ENCODE measurements at regions of chr15 and their contacts with region 1.

Region 1: DNA sequence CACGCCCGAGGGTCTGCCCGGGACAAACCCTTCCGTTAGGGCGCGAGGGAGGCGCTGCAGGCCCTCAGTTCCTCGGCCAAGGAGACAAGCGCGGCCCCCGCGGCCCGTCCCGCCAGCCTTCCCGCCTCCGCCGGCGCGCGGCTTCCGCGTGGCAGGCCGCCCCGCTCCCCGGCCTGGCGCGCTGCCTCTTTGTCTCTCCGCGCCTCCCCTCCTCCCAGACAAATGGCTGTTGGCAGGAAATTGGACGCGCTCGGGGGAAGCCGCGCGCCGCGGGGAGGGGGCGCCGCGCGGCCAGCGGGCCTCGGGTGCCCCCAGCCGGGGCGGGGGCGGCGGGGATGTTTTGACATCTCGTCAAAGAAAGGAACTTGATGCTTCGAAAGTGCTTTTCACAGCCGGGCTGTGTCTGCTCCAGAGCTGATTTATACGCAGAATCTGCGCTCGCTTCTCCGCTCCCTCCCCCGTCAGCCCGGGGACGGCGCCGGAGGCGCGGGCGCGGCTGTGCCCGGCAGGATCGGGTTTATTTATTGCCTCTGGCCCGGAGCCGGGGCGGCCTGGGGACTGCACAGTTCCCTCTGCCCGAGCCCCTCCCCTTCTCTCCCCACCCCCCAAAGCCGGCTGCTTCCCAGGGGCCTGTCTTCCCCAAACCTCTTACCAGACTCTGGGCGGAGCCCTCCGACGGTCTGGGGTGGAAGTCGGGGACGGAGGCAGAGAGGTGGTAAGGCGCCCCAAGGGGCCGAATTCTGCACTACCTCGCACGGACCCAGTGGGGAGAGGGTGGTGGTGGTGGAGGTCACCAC is 20.7 kb downstream of the SHF start:
- DNase-seq: peak; percentile 88 to 89
- H3K4me3 ChIP-seq: peak overlapping the region; percentile 52
- H3K4me3 Mint-ChIP-seq: peak overlapping the region; percentile 71
- H3K27ac Mint-ChIP-seq: peak overlapping the region; percentile 69
- H3K4me1 ChIP-seq: peaks cover 32% of the 10 kb centered on the region
- H3K4me1 Mint-ChIP-seq: peaks cover 17% of the 10 kb centered on the region
- H3K27me3 ChIP-seq: no peaks in the 10 kb centered on the region
- H3K27me3 Mint-ChIP-seq: no peaks in the 10 kb centered on the region
- CTCF ChIP-seq: peak; percentile 46 to 80

Region 2: DNA sequence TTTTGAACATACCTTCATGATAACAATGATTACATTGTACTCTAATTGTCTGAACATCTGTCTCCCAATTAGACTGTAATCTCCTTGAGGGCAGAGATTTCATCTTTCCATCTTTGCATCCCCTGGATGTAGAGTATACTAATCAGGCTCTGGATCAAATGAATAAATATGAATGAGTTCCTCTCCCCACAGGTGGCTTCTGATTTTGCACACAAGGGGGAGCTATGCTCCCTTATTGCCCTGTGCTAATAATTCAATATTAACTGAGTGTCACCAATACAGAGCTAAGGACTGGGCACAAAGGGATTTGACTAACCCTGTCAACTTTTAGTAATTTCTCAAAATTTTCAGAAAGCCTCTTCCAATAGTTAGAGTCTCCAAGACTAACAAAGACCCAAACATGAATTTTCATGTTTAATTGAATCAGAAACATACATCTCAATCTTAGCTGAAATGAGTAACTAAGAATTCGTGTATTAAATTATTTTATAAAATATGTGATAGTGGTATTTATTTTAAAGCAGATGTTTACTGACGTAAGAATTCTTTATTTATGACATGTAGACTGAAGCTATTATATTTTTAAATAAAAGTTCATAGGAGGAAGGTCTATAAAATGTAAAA is 40.4 kb before region 1 on chr15:
- CTCF ChIA-PET with region 1: interaction called, 10 read pairs
- POLR2A ChIA-PET with region 1: no interaction called
- intact Hi-C with region 1: no loop called
- DNase-seq: peak in 1 of 2 experiments; percentile 29
- H3K4me3 ChIP-seq: no peak overlapping the region
- H3K4me3 Mint-ChIP-seq: no peak overlapping the region
- H3K27ac Mint-ChIP-seq: no peak overlapping the region
- H3K4me1 ChIP-seq: peaks cover 17% of the 10 kb centered on the region; the same call in 1 of the 2 replicates
- H3K4me1 Mint-ChIP-seq: peaks cover 25% of the 10 kb centered on the region
- H3K27me3 ChIP-seq: no peaks in the 10 kb centered on the region
- H3K27me3 Mint-ChIP-seq: no peaks in the 10 kb centered on the region
- CTCF ChIP-seq: peak; percentile 30 to 63

Region 3: GRCh38 chr15:45198337-45199135 is 31.5 kb after region 1 on chr15:
- CTCF ChIA-PET with region 1: interaction called, 66 read pairs
- POLR2A ChIA-PET with region 1: interaction called, 5 read pairs
- intact Hi-C with region 1: loop called (anchors 1 kb)
- DNase-seq: peak; percentile 91 to 94
- H3K4me3 ChIP-seq: peak overlapping the region; percentile 59
- H3K4me3 Mint-ChIP-seq: no peak overlapping the region
- H3K27ac Mint-ChIP-seq: no peak overlapping the region
- H3K4me1 ChIP-seq: no peaks in the 10 kb centered on the region
- H3K4me1 Mint-ChIP-seq: peaks cover 7% of the 10 kb centered on the region
- H3K27me3 ChIP-seq: no peaks in the 10 kb centered on the region
- H3K27me3 Mint-ChIP-seq: no peaks in the 10 kb centered on the region
- CTCF ChIP-seq: peak; percentile 68 to 69

Region 4: GRCh38 chr15:45268135-45268534 is 101.1 kb after region 1 on chr15:
- CTCF ChIA-PET with region 1: no interaction called
- POLR2A ChIA-PET with region 1: no interaction called
- intact Hi-C with region 1: loop called (anchors 2 kb)
- DNase-seq: peak; percentile 39 to 49
- H3K4me3 ChIP-seq: no peak overlapping the region
- H3K4me3 Mint-ChIP-seq: no peak overlapping the region
- H3K27ac Mint-ChIP-seq: no peak overlapping the region
- H3K4me1 ChIP-seq: peaks cover 9% of the 10 kb centered on the region; the same call in 1 of the 2 replicates
- H3K4me1 Mint-ChIP-seq: peaks cover 10% of the 10 kb centered on the region
- H3K27me3 ChIP-seq: no peaks in the 10 kb centered on the region
- H3K27me3 Mint-ChIP-seq: no peaks in the 10 kb centered on the region
- CTCF ChIP-seq: peak in 1 of 2 experiments; percentile 14

Region 5: GRCh38 chr15:45402162-45402954 is 235.3 kb after region 1 on chr15:
- CTCF ChIA-PET with region 1: interaction called, 18 read pairs
- POLR2A ChIA-PET with region 1: no interaction called
- intact Hi-C with region 1: loop called (anchors 1 kb)
- DNase-seq: peak; percentile 97 to 98
- H3K4me3 ChIP-seq: peak overlapping the region; percentile 98
- H3K4me3 Mint-ChIP-seq: peak overlapping the region; percentile 93
- H3K27ac Mint-ChIP-seq: peak overlapping the region; percentile 86
- H3K4me1 ChIP-seq: no peaks in the 10 kb centered on the region; the same call in 1 of the 2 replicates
- H3K4me1 Mint-ChIP-seq: peaks cover 6% of the 10 kb centered on the region
- H3K27me3 ChIP-seq: no peaks in the 10 kb centered on the region
- H3K27me3 Mint-ChIP-seq: no peaks in the 10 kb centered on the region
- CTCF ChIP-seq: no peak

Region 6: DNA sequence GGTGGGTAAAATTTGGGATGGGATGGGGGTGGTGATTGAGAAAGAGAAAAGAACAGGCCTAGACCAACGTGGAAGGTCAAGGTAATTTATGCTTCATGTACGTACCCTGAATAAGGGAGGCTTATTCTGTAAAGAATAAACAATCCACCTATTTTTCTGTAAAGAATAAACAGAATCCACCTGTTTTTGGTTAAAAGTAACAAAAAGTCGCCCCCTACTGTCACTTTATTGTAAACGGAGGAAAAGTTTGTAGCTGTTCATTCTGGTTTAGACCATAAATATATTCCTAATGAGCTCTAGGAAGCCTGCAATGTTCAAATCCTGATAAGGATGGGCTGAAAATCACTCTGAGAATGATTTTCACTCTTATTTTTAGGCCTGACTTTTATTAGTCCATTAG is 444.3 kb after region 1 on chr15:
- CTCF ChIA-PET with region 1: interaction called, 4 read pairs
- POLR2A ChIA-PET with region 1: no interaction called
- intact Hi-C with region 1: loop called (anchors 1 kb)
- DNase-seq: peak in 1 of 2 experiments; percentile 30
- H3K4me3 ChIP-seq: no peak overlapping the region
- H3K4me3 Mint-ChIP-seq: no peak overlapping the region
- H3K27ac Mint-ChIP-seq: no peak overlapping the region
- H3K4me1 ChIP-seq: no peaks in the 10 kb centered on the region
- H3K4me1 Mint-ChIP-seq: no peaks in the 10 kb centered on the region
- H3K27me3 ChIP-seq: no peaks in the 10 kb centered on the region
- H3K27me3 Mint-ChIP-seq: no peaks in the 10 kb centered on the region
- CTCF ChIP-seq: peak; percentile 41 to 62

Measured in Caco-2 (cell line).